ENCODE measurements at regions of chr17 and their contacts with region 1.

Region 1: DNA sequence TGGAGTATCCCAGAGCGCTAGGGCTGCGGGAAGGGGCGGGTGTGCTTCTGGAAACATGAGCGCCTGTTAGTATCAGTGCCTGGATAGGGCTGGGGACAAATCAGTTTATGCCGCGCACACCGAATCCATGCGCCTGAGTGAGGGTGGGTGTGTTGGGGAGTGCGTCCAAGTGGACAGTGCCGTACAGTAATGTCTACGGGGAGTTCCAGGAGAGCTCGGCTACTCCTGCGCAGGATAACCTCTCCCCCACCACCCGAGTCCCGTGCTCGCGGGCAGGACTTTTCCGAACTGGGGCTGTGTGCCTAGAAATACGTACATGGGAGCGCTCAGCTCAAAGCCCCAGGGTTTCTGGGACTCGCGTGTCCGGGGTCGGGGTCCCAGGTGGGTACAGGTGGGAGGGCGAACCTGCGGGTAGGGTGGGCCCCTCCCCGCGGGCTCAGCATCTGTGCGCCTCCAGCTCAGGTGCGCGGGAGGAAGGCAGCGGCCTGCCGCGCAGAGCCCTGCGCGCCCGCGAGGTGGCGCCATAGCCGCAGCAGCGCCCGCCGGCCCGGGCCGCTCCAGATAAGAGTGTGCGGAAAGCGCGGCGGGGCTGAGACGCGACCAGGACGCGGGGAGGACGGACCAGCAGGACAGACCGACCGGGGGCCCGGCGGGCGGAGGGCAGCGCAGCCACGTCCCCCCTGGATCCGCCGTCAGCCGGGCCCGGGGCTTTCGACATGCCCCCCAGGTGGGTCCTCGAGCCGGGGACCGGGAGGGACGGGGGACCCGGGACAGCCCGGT is at the start of gene HIC1:
- DNase-seq: peak; percentile 96
- ATAC-seq: peak; percentile 51
- H3K4me3 Mint-ChIP-seq: peak within 1 kb of the TSS; percentile 85
- H3K27ac Mint-ChIP-seq: peak within 1 kb of the TSS; percentile 76
- H3K4me1 Mint-ChIP-seq: peaks cover 18% of the 10 kb centered on the region
- H3K27me3 Mint-ChIP-seq: peaks cover 14% of the 10 kb centered on the region
- total RNA-seq, gene HIC1: 62.1 to 64.3 TPM

Region 2: DNA sequence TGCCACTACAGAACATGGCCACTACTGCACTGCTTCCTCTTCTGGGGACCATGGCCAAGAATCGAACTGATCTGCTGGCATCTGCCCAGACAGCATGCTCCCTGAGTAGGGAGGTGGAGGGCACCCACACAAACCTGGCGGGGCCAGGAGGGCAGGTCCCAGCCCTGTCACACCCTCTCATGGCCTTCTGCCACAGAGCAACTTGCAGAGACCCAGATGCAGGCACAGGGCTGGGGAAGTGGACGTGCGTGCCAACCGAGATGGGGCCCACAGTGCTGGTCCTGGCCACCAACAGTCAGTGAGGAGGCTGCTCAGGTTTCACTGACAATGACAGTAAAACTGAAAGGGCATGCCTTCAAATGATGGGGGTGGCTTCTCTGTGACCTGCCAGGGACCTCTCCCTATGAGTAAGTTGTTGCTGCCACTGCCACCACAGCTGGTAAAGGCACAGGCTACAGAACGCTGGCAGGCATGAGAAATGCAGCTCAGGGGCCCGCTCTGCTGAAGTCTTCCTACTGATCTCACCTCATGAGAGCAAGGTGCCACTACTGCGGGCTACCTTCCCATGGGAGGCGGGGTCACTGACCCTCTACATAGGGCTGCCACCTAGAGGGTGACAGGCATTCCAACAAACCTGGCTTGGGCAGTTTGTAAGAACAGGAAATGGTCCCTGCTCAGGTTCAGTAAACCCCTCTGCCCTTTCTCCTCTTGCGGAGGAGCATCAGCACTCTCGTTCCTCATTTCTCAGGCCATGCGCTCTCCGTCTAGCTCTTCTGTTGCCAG is 15.7 kb after region 1 on chr17:
- POLR2A ChIA-PET with region 1: interaction called, 10 read pairs
- DNase-seq: no peak
- ATAC-seq: peak; percentile 79
- H3K4me3 Mint-ChIP-seq: peak overlapping the region; percentile 39
- H3K27ac Mint-ChIP-seq: peak overlapping the region; percentile 70
- H3K4me1 Mint-ChIP-seq: peaks cover 55% of the 10 kb centered on the region
- H3K27me3 Mint-ChIP-seq: no peaks in the 10 kb centered on the region

Region 3: GRCh38 chr17:2179615-2180295 is 125.1 kb after region 1 on chr17:
- POLR2A ChIA-PET with region 1: no interaction called
- DNase-seq: no peak
- ATAC-seq: no peak
- H3K4me3 Mint-ChIP-seq: no peak overlapping the region
- H3K27ac Mint-ChIP-seq: no peak overlapping the region
- H3K4me1 Mint-ChIP-seq: peaks cover 41% of the 10 kb centered on the region
- H3K27me3 Mint-ChIP-seq: no peaks in the 10 kb centered on the region

Region 4: DNA sequence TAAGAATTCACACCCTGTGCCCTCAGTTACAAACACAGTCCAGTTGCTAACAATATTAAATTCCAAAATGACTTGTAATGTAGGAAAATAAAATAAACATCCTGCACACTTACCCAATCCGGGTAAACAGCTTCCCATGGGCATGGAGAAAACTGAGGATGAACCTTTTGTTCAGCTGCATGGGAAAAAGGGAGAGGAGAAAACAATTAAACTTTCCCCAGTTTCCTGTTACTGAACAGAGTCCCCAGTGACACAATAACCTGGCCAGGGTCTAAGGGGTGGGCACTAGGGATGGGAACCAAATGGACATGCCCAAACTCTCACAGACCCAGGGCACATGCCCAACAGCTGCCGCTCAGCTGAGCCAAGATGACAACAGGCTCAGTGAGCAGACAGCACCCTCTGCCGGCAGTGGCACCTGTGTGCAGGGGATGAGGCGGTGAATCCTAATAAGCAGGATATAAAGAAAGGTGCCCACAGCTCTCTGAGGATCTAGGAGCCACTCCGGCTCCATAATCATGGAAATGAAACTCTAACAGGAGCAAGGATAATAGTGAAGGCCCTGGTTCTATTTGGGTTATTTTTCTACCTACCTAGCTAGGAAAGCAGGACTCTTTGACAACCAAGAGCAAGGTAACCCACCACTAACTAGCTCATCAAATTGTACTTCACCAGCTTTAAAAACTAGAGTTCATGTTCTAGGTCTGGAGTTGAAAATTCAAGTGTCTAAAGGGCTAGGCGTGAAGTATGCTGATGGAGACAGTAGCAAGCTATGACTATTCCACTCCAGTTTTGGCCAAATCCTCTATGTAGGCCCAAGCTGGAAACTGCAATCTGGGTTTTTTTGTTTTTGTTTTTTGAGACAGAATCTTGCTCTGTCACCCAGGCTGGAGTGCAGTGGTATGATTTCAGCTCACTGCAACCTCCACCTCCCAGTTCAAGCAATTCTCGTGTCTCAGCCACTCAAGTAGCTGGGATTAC is 190.1 kb after region 1 on chr17:
- POLR2A ChIA-PET with region 1: interaction called, 95 read pairs
- DNase-seq: peak; percentile 86
- ATAC-seq: peak; percentile 91
- H3K4me3 Mint-ChIP-seq: peak overlapping the region; percentile 12
- H3K27ac Mint-ChIP-seq: peak overlapping the region; percentile 81
- H3K4me1 Mint-ChIP-seq: peaks cover 61% of the 10 kb centered on the region
- H3K27me3 Mint-ChIP-seq: no peaks in the 10 kb centered on the region

Region 5: GRCh38 chr17:2259769-2260536 is 205.3 kb after region 1 on chr17:
- POLR2A ChIA-PET with region 1: interaction called, 86 read pairs
- DNase-seq: peak; percentile 66
- ATAC-seq: peak; percentile 72
- H3K4me3 Mint-ChIP-seq: peak overlapping the region; percentile 84
- H3K27ac Mint-ChIP-seq: peak overlapping the region; percentile 93
- H3K4me1 Mint-ChIP-seq: peaks cover 62% of the 10 kb centered on the region
- H3K27me3 Mint-ChIP-seq: no peaks in the 10 kb centered on the region

Region 6: DNA sequence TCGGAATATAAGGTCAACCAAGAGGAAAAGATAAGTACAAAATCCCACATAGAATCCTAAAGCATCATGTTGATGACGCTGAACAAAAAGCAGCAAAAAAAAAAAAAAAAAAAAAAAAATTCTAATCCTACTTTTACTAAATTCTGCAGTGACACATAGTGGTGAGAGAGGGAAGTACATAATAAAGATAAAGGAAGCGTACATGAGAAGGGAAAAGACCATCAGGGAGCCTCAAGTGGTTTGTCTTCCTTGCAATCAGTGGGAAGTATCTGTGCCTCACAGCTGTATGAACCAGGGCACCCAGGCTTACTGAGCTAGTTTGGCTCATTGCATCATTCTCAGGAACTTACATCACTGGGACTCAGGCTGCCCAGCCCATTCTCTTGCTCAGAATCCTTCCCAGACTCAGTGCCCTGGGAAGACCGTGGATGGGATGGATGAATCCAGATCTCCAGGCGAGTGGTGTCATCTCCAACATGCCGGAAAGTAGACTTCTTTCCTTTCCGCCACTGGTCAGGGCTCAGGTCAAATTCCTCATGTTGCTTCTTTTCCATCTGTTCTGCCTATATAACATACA is 227.7 kb after region 1 on chr17:
- POLR2A ChIA-PET with region 1: interaction called, 16 read pairs
- DNase-seq: no peak
- ATAC-seq: no peak
- H3K4me3 Mint-ChIP-seq: peak overlapping the region; percentile 33
- H3K27ac Mint-ChIP-seq: peak overlapping the region; percentile 54
- H3K4me1 Mint-ChIP-seq: peaks cover 43% of the 10 kb centered on the region
- H3K27me3 Mint-ChIP-seq: no peaks in the 10 kb centered on the region